ENCODE measurements at regions of chr19 and their contacts with region 1.

Region 1: DNA sequence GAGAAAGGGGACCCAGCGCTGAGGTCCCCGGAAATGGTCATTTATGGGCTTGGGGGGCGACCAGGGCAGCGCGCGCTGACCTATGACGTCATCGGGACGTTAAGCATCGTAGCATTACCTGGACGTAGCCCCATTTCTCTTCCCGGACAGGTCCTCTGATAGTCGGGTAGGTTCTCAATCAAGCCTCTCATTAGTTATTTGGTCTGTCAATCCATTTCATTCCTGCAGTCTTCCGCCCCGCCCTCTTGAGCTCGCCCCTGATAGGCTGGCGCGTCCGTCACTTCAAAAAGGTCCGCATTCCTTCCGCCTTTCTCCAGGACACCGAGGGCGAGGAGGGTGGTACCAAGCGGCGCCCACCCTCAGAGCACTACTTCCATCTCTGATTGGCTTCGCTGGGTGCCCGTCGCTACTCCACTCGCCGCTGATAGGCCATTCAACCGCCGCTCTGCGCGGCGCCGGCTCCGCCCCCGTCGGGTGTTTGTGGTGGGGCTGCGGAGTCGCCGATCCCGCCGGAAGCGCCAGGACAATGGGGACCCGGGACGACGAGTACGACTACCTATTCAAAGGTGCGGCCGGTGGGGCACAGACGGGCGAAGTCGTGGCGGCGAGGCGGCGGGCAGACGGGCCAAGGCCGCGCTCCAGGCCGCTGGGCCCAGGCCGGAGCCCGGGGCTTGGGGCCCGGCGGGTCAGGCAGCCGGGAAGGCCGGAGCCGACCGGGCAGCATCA is at the start of gene RAB11B:
- DNase-seq: peak; percentile 98 to 99
- H3K4me3 ChIP-seq: peak within 1 kb of the TSS; percentile 79 to 99 (median 85)
- H3K27ac ChIP-seq: peak within 1 kb of the TSS; percentile 100
- H3K4me1 ChIP-seq: peaks cover 0 to 10% (median 4%) of the 10 kb centered on the region in 4 experiments; a peak in 6 of 7 replicates
- H3K27me3 ChIP-seq: no peaks in the 10 kb centered on the region
- CTCF ChIP-seq: no peak
- EP300 ChIP-seq: peak in 1 of 2 experiments; percentile 41; a peak in 1 of 3 replicates
- POLR2A ChIP-seq: peak; percentile 57 to 86
- RAD21 ChIP-seq: no peak
- total RNA-seq, gene RAB11B: 85.8 and 90.2 TPM in 2 replicates

Region 2: DNA sequence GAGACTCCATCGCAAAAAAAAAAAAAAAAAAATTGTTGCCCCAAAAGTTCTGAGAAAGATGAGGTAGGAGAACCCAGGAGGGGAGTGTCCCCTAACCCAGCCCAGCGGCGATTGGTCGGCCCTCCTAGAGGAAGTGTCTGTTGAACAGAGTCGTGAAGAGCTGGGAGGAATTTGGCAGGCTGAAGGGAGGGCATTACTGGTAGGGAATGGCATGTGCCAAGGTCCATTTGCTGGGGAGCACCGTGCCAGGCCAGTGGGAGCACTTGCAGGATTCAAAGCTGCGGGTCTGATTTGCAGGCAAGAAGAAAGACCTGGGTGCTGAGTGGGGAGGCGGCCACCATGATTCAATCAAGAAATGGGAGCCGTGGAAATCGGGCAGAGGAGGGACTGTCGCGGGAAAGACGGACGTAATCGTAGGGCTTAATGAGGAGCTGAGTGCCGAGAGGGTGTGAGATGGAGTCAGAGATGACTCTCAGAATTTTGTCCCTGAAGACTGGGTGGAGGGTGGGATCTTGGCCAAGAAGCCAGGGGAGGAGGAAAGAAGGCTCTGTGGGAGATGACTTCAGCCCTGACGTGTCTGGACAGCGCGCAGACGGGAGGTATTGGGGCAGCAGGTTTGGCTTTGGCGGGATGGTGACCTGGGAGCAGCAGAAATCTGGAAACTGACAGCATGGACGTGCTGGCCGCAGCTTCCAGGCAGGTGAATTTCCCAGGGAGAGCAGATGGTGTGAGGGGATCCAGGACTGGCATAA is 165.5 kb before region 1 on chr19:
- CTCF ChIA-PET with region 1: no interaction called
- POLR2A ChIA-PET with region 1: no interaction called
- DNase-seq: no peak
- H3K4me3 ChIP-seq: no peak overlapping the region
- H3K27ac ChIP-seq: no peak overlapping the region; the same call in 1 of the 2 replicates
- H3K4me1 ChIP-seq: no peaks in the 10 kb centered on the region
- H3K27me3 ChIP-seq: no peaks in the 10 kb centered on the region
- CTCF ChIP-seq: no peak
- EP300 ChIP-seq: no peak
- POLR2A ChIP-seq: no peak
- RAD21 ChIP-seq: no peak

Region 3: DNA sequence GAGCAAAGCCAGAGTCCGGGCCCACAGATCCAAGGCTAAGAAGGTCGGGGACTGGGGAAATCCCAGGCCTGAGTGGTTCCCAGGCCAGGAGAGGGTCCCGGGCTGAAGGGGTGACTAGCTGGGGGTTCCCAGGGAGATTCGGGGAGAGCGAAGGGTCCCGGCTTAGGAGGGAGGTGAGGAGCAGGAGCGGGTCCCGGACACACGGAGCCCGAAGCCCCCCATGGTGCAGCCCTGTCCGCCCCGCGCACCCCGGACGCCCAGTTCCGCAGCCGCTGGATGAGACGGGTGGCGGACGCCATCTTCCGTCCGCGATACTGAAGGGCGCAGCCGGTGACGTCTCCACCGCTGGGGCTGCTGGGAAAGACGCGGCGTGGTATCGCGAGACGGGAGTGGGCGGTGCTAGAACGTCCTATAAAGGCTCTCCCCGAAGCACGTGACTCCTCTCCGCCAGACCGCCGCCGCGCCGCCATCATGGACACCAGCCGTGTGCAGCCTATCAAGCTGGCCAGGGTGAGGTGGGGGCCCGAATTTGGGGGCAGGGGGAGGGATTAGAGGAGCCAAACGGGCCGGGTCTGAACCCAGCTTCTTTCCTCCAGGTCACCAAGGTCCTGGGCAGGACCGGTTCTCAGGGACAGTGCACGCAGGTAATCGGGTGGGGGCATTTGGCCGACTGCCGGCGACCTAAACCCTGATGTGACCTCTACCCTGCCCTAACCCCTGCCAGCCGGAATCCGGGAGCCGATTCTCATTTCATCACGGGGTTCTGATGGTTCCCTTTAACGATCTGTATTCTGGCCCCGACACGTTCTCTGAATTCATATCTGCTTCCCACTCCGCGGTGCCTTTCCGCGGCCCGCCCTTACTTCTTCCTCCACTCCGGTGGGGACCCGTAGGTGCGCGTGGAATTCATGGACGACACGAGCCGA is 68.7 kb before region 1 on chr19 and contains the starts of genes NDUFA7 and RPS28:
- CTCF ChIA-PET with region 1: interaction called, 5 read pairs
- POLR2A ChIA-PET with region 1: interaction called, 20 read pairs
- DNase-seq: peak; percentile 87 to 99
- H3K4me3 ChIP-seq: peak within 1 kb of the TSS; percentile 90 to 98 (median 97)
- H3K27ac ChIP-seq: peak within 1 kb of the TSS; percentile 91
- H3K4me1 ChIP-seq: peaks cover 0 to 17% (median 9%) of the 10 kb centered on the region in 4 experiments; a peak in 6 of 7 replicates
- H3K27me3 ChIP-seq: no peaks in the 10 kb centered on the region
- CTCF ChIP-seq: peak in 1 of 3 experiments; percentile 18; a peak in 1 of 4 replicates
- EP300 ChIP-seq: 0 out of 3 replicates have a peak, but pooled peaks of 1 of the 2 experiments have one; percentile 50
- POLR2A ChIP-seq: peak; percentile 83 to 98
- RAD21 ChIP-seq: peak; percentile 19 to 41; a peak in 2 of 4 replicates
- total RNA-seq, gene NDUFA7: 51.6 and 54.4 TPM in 2 replicates
- total RNA-seq, gene RPS28: 1,699 and 1,856 TPM in 2 replicates

Region 4: DNA sequence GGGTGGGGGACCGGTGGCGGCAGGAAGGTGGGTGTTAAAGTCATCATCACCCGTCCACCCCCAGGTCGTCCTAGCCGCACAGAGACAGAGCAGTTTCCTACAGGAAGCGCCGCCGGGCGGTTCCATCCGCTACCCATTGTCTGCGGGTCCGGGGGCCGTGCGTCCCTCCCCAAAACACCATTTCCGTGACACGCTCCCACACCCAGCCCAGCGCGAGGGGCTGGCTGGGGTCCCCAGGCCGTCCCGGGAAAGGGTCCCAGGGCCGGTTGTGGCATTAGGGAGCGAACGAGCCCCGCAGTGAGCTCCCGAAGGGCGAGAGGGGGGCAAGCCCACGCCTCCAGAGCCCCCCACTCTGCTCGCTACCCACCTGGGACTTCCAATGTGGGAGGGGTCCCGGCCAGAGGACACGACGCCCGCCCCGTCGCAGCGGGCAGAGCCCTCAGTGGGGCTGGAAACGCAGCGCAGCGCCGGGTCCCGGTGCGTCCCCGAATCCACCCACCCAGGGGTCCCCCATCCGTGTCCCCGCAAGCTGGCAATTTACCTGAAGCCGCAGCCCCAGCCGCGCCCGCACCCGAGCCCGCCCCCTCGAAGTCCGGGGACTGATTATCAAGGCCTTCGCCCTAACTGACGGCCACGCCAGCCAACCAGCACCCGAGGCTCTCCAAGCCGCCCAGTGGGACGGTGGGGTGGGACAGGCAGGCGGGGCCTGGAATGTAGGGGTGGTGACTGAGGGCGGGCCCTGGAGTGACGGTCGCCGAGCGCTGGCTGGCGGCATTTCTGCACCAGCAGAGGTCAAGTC is 47.2 kb before region 1 on chr19 and contains the start of gene KANK3:
- CTCF ChIA-PET with region 1: interaction called, 13 read pairs
- POLR2A ChIA-PET with region 1: interaction called, 11 read pairs
- DNase-seq: peak; percentile 95 to 99
- H3K4me3 ChIP-seq: peak within 1 kb of the TSS; percentile 50 to 71 (median 56)
- H3K27ac ChIP-seq: no peak within 1 kb of the TSS
- H3K4me1 ChIP-seq: peaks cover 0 to 9% (median 3%) of the 10 kb centered on the region in 4 experiments; a peak in 4 of 7 replicates
- H3K27me3 ChIP-seq: peaks cover 0 to 9% (median 7%) of the 10 kb centered on the region in 4 experiments; a peak in 3 of 7 replicates
- CTCF ChIP-seq: no peak
- EP300 ChIP-seq: no peak
- POLR2A ChIP-seq: no peak
- RAD21 ChIP-seq: no peak
- total RNA-seq, gene KANK3: 2.3 and 2.5 TPM in 2 replicates

Region 5: DNA sequence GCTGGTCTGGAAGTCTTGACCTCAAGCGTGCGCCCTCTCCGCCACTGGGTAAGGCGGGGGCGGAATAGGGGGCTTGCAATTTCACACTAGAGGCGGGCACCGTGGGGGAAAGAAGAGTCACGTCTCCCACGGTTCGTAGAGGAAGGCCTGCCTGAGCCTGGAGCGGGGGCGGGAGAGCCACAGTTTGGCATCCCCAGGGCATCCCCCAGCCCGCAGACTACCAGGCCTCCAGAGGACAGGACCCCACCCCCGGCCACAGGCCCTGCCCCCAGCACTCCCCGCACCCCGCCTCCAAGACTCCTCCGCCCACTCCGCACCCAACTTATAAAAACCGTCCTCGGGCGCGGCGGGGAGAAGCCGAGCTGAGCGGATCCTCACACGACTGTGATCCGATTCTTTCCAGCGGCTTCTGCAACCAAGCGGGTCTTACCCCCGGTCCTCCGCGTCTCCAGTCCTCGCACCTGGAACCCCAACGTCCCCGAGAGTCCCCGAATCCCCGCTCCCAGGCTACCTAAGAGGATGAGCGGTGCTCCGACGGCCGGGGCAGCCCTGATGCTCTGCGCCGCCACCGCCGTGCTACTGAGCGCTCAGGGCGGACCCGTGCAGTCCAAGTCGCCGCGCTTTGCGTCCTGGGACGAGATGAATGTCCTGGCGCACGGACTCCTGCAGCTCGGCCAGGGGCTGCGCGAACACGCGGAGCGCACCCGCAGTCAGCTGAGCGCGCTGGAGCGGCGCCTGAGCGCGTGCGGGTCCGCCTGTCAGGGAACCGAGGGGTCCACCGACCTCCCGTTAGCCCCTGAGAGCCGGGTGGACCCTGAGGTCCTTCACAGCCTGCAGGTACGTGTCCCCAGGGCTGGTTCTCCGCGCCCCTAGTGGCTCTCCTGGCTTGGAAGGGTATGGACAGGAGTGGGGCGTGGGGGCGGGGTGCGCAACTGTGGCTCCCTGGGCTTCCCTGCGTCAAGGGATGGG is 26.0 kb before region 1 on chr19 and contains the start of gene ANGPTL4:
- CTCF ChIA-PET with region 1: interaction called, 6 read pairs
- POLR2A ChIA-PET with region 1: interaction called, 71 read pairs
- DNase-seq: peak in 1 of 2 experiments; percentile 85
- H3K4me3 ChIP-seq: peak within 1 kb of the TSS; percentile 49 to 69 (median 58)
- H3K27ac ChIP-seq: no peak within 1 kb of the TSS
- H3K4me1 ChIP-seq: peaks cover 0 to 15% (median 8%) of the 10 kb centered on the region in 4 experiments; a peak in 6 of 7 replicates
- H3K27me3 ChIP-seq: peaks cover 0 to 26% (median 18%) of the 10 kb centered on the region in 4 experiments; a peak in 6 of 7 replicates
- CTCF ChIP-seq: peak in 1 of 3 experiments; percentile 11; a peak in 1 of 4 replicates
- EP300 ChIP-seq: no peak
- POLR2A ChIP-seq: peak in 1 of 2 experiments; percentile 65; a peak in 2 of 3 replicates
- RAD21 ChIP-seq: no peak
- total RNA-seq, gene ANGPTL4: 1.8 and 2.3 TPM in 2 replicates

Region 6: GRCh38 chr19:8373867-8374813 is 15.9 kb before region 1 on chr19:
- CTCF ChIA-PET with region 1: interaction called, 4 read pairs
- POLR2A ChIA-PET with region 1: interaction called, 71 read pairs
- DNase-seq: no peak
- H3K4me3 ChIP-seq: no peak overlapping the region
- H3K27ac ChIP-seq: no peak overlapping the region
- H3K4me1 ChIP-seq: no peaks in the 10 kb centered on the region
- H3K27me3 ChIP-seq: no peaks in the 10 kb centered on the region
- CTCF ChIP-seq: peak in 2 of 3 experiments; percentile 24 to 31; a peak in 2 of 4 replicates
- EP300 ChIP-seq: no peak
- POLR2A ChIP-seq: no peak
- RAD21 ChIP-seq: peak; percentile 30 to 52; a peak in 3 of 4 replicates

Region 7: GRCh38 chr19:8412783-8413628 is 23.0 kb after region 1 on chr19 and contains the start of gene MARCHF2:
- CTCF ChIA-PET with region 1: interaction called, 11 read pairs
- POLR2A ChIA-PET with region 1: interaction called, 9 read pairs
- DNase-seq: peak; percentile 96
- H3K4me3 ChIP-seq: peak within 1 kb of the TSS; percentile 65 to 83 (median 68)
- H3K27ac ChIP-seq: no peak within 1 kb of the TSS
- H3K4me1 ChIP-seq: peaks cover 0 to 3% (median under 1%) of the 10 kb centered on the region in 4 experiments; a peak in 3 of 7 replicates
- H3K27me3 ChIP-seq: no peaks in the 10 kb centered on the region
- CTCF ChIP-seq: peak; percentile 38 to 62 (median 43)
- EP300 ChIP-seq: no peak
- POLR2A ChIP-seq: no peak
- RAD21 ChIP-seq: peak in 1 of 2 experiments; percentile 52; a peak in 2 of 4 replicates
- total RNA-seq, gene MARCHF2: 18.5 and 19.7 TPM in 2 replicates

Region 8: DNA sequence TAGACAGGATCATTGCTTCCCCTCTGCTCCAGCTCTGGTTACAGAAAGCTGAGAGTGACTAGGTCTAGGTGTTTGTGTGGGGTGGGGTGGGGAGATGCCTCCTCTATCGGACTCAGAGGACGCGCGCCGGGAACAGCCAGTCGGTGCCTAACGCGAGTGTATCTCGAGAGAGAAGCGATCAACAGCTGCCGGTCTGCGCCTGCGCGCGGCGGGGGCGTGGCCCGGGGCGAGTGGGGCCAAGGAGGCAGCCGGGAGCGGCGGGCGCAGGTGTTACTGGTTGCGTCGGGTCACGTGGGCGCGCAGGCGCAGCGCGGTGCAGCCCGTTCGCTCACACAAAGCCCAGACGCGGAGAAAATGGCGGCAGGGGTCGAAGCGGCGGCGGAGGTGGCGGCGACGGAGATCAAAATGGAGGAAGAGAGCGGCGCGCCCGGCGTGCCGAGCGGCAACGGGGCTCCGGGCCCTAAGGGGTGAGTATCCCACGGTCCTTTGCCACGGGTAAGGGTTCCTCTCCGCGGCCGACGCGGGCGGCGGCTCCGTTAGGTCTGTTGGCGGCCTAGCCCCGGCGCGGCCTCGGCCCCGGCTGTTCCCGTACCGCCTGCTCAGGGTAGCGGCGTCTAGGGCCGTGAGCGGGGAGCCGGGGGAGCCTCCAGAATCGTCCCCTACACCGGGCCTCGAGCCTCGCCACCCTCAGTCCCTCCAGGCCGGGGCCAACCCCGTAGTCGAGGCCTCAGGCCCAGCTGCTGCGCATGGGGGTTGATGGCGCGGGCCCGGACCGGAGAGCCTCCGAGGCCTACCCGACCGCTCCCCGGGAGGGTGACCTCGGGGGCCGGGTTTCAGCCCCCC is 54.8 kb after region 1 on chr19 and contains the start of gene HNRNPM:
- CTCF ChIA-PET with region 1: no interaction called
- POLR2A ChIA-PET with region 1: interaction called, 12 read pairs
- DNase-seq: peak; percentile 87 to 100
- H3K4me3 ChIP-seq: peak within 1 kb of the TSS; percentile 85 to 93 (median 88)
- H3K27ac ChIP-seq: peak within 1 kb of the TSS; percentile 98
- H3K4me1 ChIP-seq: peaks cover 7 to 26% (median 17%) of the 10 kb centered on the region in 4 experiments
- H3K27me3 ChIP-seq: no peaks in the 10 kb centered on the region
- CTCF ChIP-seq: no peak
- EP300 ChIP-seq: no peak
- POLR2A ChIP-seq: peak; percentile 91 to 97
- RAD21 ChIP-seq: no peak
- total RNA-seq, gene HNRNPM: 448 and 474 TPM in 2 replicates

Region 9: DNA sequence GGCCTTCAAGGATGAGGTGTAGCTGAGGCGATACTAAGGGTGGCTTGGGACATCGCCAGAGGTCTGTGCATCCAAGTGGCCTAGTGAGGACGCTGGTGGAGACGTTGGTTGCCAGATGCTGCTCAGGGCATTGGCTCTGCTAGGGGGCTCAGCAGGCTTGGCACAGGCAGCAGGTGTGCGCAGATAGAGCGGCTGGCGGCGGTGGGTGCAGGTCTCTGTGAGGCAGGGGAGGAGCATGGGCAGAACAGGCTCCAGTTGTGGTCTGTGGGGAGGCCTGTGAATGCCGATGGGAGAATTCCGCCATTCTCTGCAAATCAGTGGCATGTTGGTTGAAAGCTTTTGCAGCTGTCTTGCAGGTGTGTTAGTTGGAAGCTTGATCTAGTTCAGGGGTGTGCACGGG is 91.1 kb after region 1 on chr19:
- CTCF ChIA-PET with region 1: no interaction called
- POLR2A ChIA-PET with region 1: no interaction called
- DNase-seq: no peak
- H3K4me3 ChIP-seq: no peak overlapping the region
- H3K27ac ChIP-seq: peak overlapping the region; percentile 60; the same call in 1 of the 2 replicates
- H3K4me1 ChIP-seq: no peaks in the 10 kb centered on the region; a peak in 1 of 7 replicates
- H3K27me3 ChIP-seq: no peaks in the 10 kb centered on the region
- CTCF ChIP-seq: no peak
- EP300 ChIP-seq: no peak
- POLR2A ChIP-seq: no peak
- RAD21 ChIP-seq: no peak